WTC11 (cell line): ENCODE measurements at regions of chr2 and their contacts with region 1.

Region 1: GRCh38 chr2:42828487-42829425 is 36.4 kb upstream of the HAAO start:
- DNase-seq: peak; percentile 82
- ATAC-seq: peak; percentile 89
- H3K4me3 Mint-ChIP-seq: no peak overlapping the region
- H3K27ac Mint-ChIP-seq: no peak overlapping the region
- H3K4me1 Mint-ChIP-seq: 0 out of 2 replicates have a peak, but pooled peaks cover 8% of the 10 kb centered on the region
- H3K27me3 Mint-ChIP-seq: peaks cover 16% of the 10 kb centered on the region
- CTCF ChIP-seq: peak; percentile 81

Region 2: GRCh38 chr2:42792583-42793333 is 36.0 kb before region 1 on chr2 and contains the start of gene HAAO:
- CTCF ChIA-PET with region 1: interaction called, 10 read pairs
- POLR2A ChIA-PET with region 1: no interaction called
- DNase-seq: peak; percentile 67
- ATAC-seq: peak; percentile 52
- H3K4me3 Mint-ChIP-seq: peak within 1 kb of the TSS; percentile 79
- H3K27ac Mint-ChIP-seq: peak within 1 kb of the TSS; percentile 40; the same call in 1 of the 2 replicates
- H3K4me1 Mint-ChIP-seq: peaks cover 39% of the 10 kb centered on the region
- H3K27me3 Mint-ChIP-seq: peaks cover 17% of the 10 kb centered on the region
- CTCF ChIP-seq: no peak
- total RNA-seq, gene HAAO: 8.0 to 9.8 TPM (median 8.4 TPM) in 3 replicates

Region 3: DNA sequence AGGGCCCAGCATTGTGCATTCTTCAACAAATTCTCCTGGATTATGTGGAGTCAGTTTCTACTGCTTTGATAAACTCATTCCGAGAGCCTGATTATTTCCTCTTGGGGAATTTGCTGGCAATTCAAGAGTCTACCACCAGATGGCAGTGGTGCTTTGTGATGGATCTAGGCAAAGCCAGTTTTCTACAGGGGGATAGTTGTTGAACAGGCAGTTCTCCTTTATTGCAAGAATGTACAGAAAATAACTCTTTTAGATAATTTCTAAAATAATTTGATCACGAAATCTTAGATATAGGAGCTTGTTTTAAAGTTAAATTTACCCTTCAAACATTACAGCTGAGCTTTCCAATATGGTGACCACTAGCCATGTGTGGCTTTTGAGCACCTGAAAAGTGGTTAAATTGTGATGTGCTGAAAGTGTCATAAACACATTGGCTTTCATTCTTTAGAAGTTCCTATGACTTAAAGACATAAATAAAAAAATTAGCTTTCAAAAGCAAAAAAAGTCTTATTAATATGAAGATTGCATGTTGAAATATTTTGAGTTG is 30.3 kb after region 1 on chr2:
- CTCF ChIA-PET with region 1: interaction called, 14 read pairs
- POLR2A ChIA-PET with region 1: no interaction called
- DNase-seq: peak; percentile 81
- ATAC-seq: peak; percentile 30; the same call in 1 of the 2 replicates
- H3K4me3 Mint-ChIP-seq: no peak overlapping the region
- H3K27ac Mint-ChIP-seq: no peak overlapping the region
- H3K4me1 Mint-ChIP-seq: peaks cover 3% of the 10 kb centered on the region
- H3K27me3 Mint-ChIP-seq: no peaks in the 10 kb centered on the region; the same call in 1 of the 2 replicates
- CTCF ChIP-seq: peak; percentile 93

Region 4: GRCh38 chr2:42920446-42921139 is 91.8 kb after region 1 on chr2:
- CTCF ChIA-PET with region 1: no interaction called
- POLR2A ChIA-PET with region 1: no interaction called
- DNase-seq: no peak
- ATAC-seq: no peak
- H3K4me3 Mint-ChIP-seq: no peak overlapping the region
- H3K27ac Mint-ChIP-seq: no peak overlapping the region
- H3K4me1 Mint-ChIP-seq: peaks cover 30% of the 10 kb centered on the region
- H3K27me3 Mint-ChIP-seq: peaks cover 2% of the 10 kb centered on the region; the same call in 1 of the 2 replicates
- CTCF ChIP-seq: no peak